ENCODE measurements at regions of chr16 and their contacts with region 1.

Region 1: GRCh38 chr16:67296422-67296821 is 17.1 kb downstream of the PLEKHG4 start:
- DNase-seq: no peak
- ATAC-seq: no peak
- H3K4me3 ChIP-seq: no peak overlapping the region
- H3K4me3 Mint-ChIP-seq: no peak overlapping the region
- H3K27ac ChIP-seq: no peak overlapping the region
- H3K27ac Mint-ChIP-seq: no peak overlapping the region
- H3K4me1 ChIP-seq: no peaks in the 10 kb centered on the region
- H3K4me1 Mint-ChIP-seq: no peaks in the 10 kb centered on the region
- H3K27me3 ChIP-seq: no peaks in the 10 kb centered on the region
- H3K27me3 Mint-ChIP-seq: peaks cover 3% of the 10 kb centered on the region
- CTCF ChIP-seq: no peak

Region 2: DNA sequence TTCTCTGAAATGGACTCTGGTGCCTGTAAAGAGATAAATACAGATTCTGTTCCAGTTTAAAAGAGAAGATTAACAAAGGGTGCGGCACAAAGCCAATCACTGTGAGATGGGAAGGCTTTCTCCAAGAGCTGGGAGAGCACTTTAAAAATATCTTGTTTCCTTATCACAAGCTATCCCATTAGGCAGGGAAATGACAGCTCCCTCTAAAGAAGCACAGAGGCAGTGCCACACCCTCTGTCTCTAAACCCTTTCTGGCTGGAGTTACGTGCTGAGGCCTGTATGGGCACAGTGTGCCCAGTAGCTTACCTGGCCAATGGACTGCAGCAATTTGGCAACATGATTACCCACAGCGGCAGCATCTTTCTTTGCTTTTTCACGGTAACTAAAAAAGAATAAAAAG is 486.0 kb before region 1 on chr16:
- CTCF ChIA-PET with region 1: no interaction called
- POLR2A ChIA-PET with region 1: no interaction called
- intact Hi-C with region 1: no loop called
- DNase-seq: no peak
- ATAC-seq: no peak
- H3K4me3 ChIP-seq: no peak overlapping the region
- H3K4me3 Mint-ChIP-seq: no peak overlapping the region
- H3K27ac ChIP-seq: no peak overlapping the region
- H3K27ac Mint-ChIP-seq: no peak overlapping the region
- H3K4me1 ChIP-seq: no peaks in the 10 kb centered on the region
- H3K4me1 Mint-ChIP-seq: no peaks in the 10 kb centered on the region
- H3K27me3 ChIP-seq: no peaks in the 10 kb centered on the region
- H3K27me3 Mint-ChIP-seq: no peaks in the 10 kb centered on the region
- CTCF ChIP-seq: no peak

Region 3: GRCh38 chr16:67461600-67462592 is 165.5 kb after region 1 on chr16:
- CTCF ChIA-PET with region 1: no interaction called
- POLR2A ChIA-PET with region 1: no interaction called
- intact Hi-C with region 1: loop called in 1 of 2 experiments (anchors 5 kb)
- DNase-seq: no peak
- ATAC-seq: no peak
- H3K4me3 ChIP-seq: no peak overlapping the region
- H3K4me3 Mint-ChIP-seq: no peak overlapping the region
- H3K27ac ChIP-seq: no peak overlapping the region
- H3K27ac Mint-ChIP-seq: no peak overlapping the region
- H3K4me1 ChIP-seq: no peaks in the 10 kb centered on the region
- H3K4me1 Mint-ChIP-seq: peaks cover 33% of the 10 kb centered on the region
- H3K27me3 ChIP-seq: no peaks in the 10 kb centered on the region
- H3K27me3 Mint-ChIP-seq: no peaks in the 10 kb centered on the region
- CTCF ChIP-seq: no peak

Measured in CD8-positive, alpha-beta T cell (primary cell).